Heart right ventricle (tissue), 16 donors: ENCODE measurements at regions of chr4 and their contacts with region 1.

Region 1: DNA sequence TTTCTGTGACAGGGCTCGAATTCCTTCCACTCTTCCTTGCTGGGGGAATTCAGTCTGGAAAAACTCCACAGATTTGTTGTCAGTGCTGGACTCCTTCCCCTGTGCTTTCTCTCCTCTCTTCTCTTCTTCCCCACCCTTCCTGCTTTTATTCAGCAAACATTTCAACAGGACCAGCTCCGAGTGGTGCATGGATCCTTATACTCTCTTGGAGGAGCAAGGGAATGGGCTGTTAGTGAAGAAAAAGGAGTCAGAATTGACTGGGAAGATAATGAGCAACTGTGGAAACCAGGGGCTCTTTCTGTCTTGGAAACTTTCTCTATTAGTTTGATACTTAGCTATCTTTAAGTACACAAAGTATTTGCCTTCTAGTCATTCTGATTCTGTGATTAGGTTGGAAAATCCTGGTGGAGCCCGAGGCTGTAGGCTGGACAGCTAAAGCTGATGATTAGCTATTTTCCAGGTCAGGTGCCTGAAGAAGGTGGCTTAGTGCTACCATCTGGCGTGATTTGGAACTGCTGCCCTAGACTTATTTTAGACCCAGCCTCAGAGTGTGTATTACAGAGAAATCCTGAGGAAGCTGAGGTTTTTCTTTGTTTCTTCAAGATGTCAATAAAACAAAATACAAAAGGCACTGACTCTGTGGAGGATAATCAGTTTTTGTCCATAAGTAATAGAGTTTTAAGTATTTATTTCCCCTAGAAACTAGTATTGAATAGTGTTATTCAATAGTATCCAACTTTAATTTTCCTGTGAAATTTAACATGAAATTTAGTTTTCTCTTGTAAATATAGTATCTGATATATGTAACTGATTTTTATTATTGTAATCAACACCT is 38.4 kb downstream of the NAP1L5 start:
- DNase-seq: peak in 1 of 2 donors; percentile 46
- ATAC-seq: peak; percentile 87 to 98 (median 96)
- H3K4me3 ChIP-seq: no peak overlapping the region
- H3K27ac ChIP-seq: peak overlapping the region in 3 of 10 donors; percentile 28 to 44 (median 28)
- H3K4me1 ChIP-seq: peaks cover 0 to 12% (median 0%) of the 10 kb centered on the region in 9 donors
- H3K27me3 ChIP-seq: no peaks in the 10 kb centered on the region
- CTCF ChIP-seq: peak; percentile 39 to 81 (median 75)

Region 2: GRCh38 chr4:88419874-88420273 is 239.4 kb before region 1 on chr4:
- intact Hi-C with region 1: no loop called
- DNase-seq: no peak
- ATAC-seq: no peak
- H3K4me3 ChIP-seq: no peak overlapping the region
- H3K27ac ChIP-seq: no peak overlapping the region
- H3K4me1 ChIP-seq: no peaks in the 10 kb centered on the region
- H3K27me3 ChIP-seq: no peaks in the 10 kb centered on the region
- CTCF ChIP-seq: no peak

Region 3: GRCh38 chr4:88591787-88592599 is 67.3 kb before region 1 on chr4 and contains the start of gene HERC3:
- intact Hi-C with region 1: loop called in 5 of 10 experiments (anchors 5 to 10 kb)
- DNase-seq: peak; percentile 93 to 94
- ATAC-seq: peak; percentile 97 to 99 (median 98)
- H3K4me3 ChIP-seq: peak within 1 kb of the TSS; percentile 77 to 98 (median 92)
- H3K27ac ChIP-seq: peak within 1 kb of the TSS; percentile 82 to 99 (median 96)
- H3K4me1 ChIP-seq: peaks cover 0 to 40% (median 29%) of the 10 kb centered on the region in 9 donors
- H3K27me3 ChIP-seq: no peaks in the 10 kb centered on the region
- CTCF ChIP-seq: peak in 5 of 9 donors; percentile 11 to 38 (median 25)
- total RNA-seq, gene HERC3: 40.6 to 62.6 (median 47.2) TPM